ENCODE measurements at regions of chr6 and their contacts with region 1.

Region 1: GRCh38 chr6:117482240-117483003 is at the start of gene DCBLD1:
- DNase-seq: peak; percentile 78
- ATAC-seq: peak; percentile 83
- H3K4me3 ChIP-seq: peak within 1 kb of the TSS; percentile 86 to 88
- H3K27ac ChIP-seq: peak within 1 kb of the TSS; percentile 88
- H3K4me1 ChIP-seq: peaks cover 11 to 21% of the 10 kb centered on the region in 2 experiments; a peak in 3 of 4 replicates
- H3K27me3 ChIP-seq: no peaks in the 10 kb centered on the region
- CTCF ChIP-seq: no peak
- POLR2A ChIP-seq: peak; percentile 59
- RAD21 ChIP-seq: no peak
- total RNA-seq, gene DCBLD1: 19.5 TPM

Region 2: GRCh38 chr6:117157448-117157847 is 325.0 kb before region 1 on chr6:
- CTCF ChIA-PET with region 1: no interaction called
- POLR2A ChIA-PET with region 1: no interaction called
- RAD21 ChIA-PET with region 1: no interaction called
- intact Hi-C with region 1: no loop called
- DNase-seq: no peak
- ATAC-seq: no peak
- H3K4me3 ChIP-seq: no peak overlapping the region
- H3K27ac ChIP-seq: no peak overlapping the region
- H3K4me1 ChIP-seq: no peaks in the 10 kb centered on the region
- H3K27me3 ChIP-seq: no peaks in the 10 kb centered on the region
- CTCF ChIP-seq: no peak
- POLR2A ChIP-seq: no peak
- RAD21 ChIP-seq: no peak

Region 3: GRCh38 chr6:117329885-117330284 is 152.5 kb before region 1 on chr6:
- CTCF ChIA-PET with region 1: no interaction called
- POLR2A ChIA-PET with region 1: no interaction called
- RAD21 ChIA-PET with region 1: no interaction called
- intact Hi-C with region 1: no loop called
- DNase-seq: no peak
- ATAC-seq: no peak
- H3K4me3 ChIP-seq: no peak overlapping the region
- H3K27ac ChIP-seq: no peak overlapping the region
- H3K4me1 ChIP-seq: no peaks in the 10 kb centered on the region
- H3K27me3 ChIP-seq: no peaks in the 10 kb centered on the region
- CTCF ChIP-seq: no peak
- POLR2A ChIP-seq: no peak
- RAD21 ChIP-seq: no peak

Region 4: GRCh38 chr6:117555882-117556498 is 73.6 kb after region 1 on chr6:
- CTCF ChIA-PET with region 1: interaction called, 4 read pairs
- POLR2A ChIA-PET with region 1: no interaction called
- RAD21 ChIA-PET with region 1: interaction called in 1 of 2 experiments, 3 read pairs
- intact Hi-C with region 1: loop called (anchors 2 kb)
- DNase-seq: no peak
- ATAC-seq: peak; percentile 58
- H3K4me3 ChIP-seq: no peak overlapping the region
- H3K27ac ChIP-seq: no peak overlapping the region
- H3K4me1 ChIP-seq: peaks cover under 1 to 7% of the 10 kb centered on the region in 2 experiments; a peak in 2 of 4 replicates
- H3K27me3 ChIP-seq: no peaks in the 10 kb centered on the region
- CTCF ChIP-seq: peak; percentile 61 to 87 (median 77); a peak in 5 of 6 replicates
- POLR2A ChIP-seq: no peak
- RAD21 ChIP-seq: peak; percentile 83

Region 5: GRCh38 chr6:117602151-117602898 is 119.9 kb after region 1 on chr6 and contains the start of gene GOPC:
- CTCF ChIA-PET with region 1: interaction called, 5 read pairs
- POLR2A ChIA-PET with region 1: interaction called, 6 read pairs
- RAD21 ChIA-PET with region 1: no interaction called
- intact Hi-C with region 1: loop called (anchors 1 kb)
- DNase-seq: peak; percentile 95
- ATAC-seq: peak; percentile 90
- H3K4me3 ChIP-seq: peak within 1 kb of the TSS; percentile 88 to 89
- H3K27ac ChIP-seq: peak within 1 kb of the TSS; percentile 86
- H3K4me1 ChIP-seq: peaks cover 9 to 18% of the 10 kb centered on the region in 2 experiments
- H3K27me3 ChIP-seq: no peaks in the 10 kb centered on the region
- CTCF ChIP-seq: 0 out of 6 replicates have a peak, but pooled peaks of 1 of the 3 experiments have one; percentile 12
- POLR2A ChIP-seq: peak; percentile 77
- RAD21 ChIP-seq: no peak
- total RNA-seq, gene GOPC: 24.2 TPM

Region 6: DNA sequence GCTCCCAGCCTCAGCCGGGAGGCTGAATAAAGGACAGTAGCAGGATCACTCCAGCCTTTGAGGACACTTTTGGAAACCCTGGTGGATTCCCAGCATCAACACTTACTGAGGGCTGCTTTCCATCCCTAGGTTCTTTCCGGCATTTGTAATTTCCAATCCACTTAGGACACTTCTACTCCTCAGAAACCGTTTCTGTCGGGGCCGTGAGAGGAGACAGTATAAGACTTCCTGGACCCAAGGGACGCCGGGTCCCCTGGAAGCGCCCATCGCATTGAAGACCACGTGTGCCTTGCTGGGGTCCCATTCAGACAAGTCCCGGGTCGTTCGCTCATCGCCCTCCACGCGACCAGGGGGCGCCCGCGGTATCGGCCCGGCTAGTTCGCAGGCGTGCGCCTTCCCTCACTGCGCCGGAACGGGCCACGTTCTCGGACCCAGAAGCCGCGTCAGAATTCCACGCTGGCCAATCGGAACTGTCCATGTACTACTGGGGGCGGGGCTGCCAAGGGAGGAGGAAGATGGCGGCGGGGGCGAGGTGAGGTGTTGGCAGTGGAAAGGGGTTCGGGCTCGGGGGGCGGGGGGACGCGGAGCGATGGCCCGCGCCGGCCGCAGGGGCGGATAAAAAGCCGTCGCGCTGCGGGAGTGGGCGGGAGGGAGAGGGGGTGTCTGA is 192.7 kb after region 1 on chr6 and contains the start of gene NUS1:
- CTCF ChIA-PET with region 1: no interaction called
- POLR2A ChIA-PET with region 1: no interaction called
- RAD21 ChIA-PET with region 1: interaction called in 1 of 2 experiments, 3 read pairs
- intact Hi-C with region 1: loop called (anchors 10 kb)
- DNase-seq: peak; percentile 94
- ATAC-seq: peak; percentile 98
- H3K4me3 ChIP-seq: peak within 1 kb of the TSS; percentile 71 to 75
- H3K27ac ChIP-seq: peak within 1 kb of the TSS; percentile 30; the same call in 1 of the 2 replicates
- H3K4me1 ChIP-seq: peaks cover 7 to 22% of the 10 kb centered on the region in 2 experiments; a peak in 3 of 4 replicates
- H3K27me3 ChIP-seq: no peaks in the 10 kb centered on the region
- CTCF ChIP-seq: peak; percentile 57 to 65 (median 57); a peak in 5 of 6 replicates
- POLR2A ChIP-seq: no peak
- RAD21 ChIP-seq: no peak
- total RNA-seq, gene NUS1: 46.2 TPM